Prostate gland (tissue), 2 donors: ENCODE measurements at regions of chr10 and their contacts with region 1.

Region 1: GRCh38 chr10:35126530-35127296 is at the start of gene CREM:
- DNase-seq: peak; percentile 99
- H3K4me3 ChIP-seq: peak within 1 kb of the TSS; percentile 64 to 98
- H3K27ac ChIP-seq: peak within 1 kb of the TSS; percentile 97 to 99
- H3K4me1 ChIP-seq: no peaks in the 10 kb centered on the region
- H3K27me3 ChIP-seq: no peaks in the 10 kb centered on the region
- CTCF ChIP-seq: peak; percentile 80 to 94 (median 90)
- POLR2A ChIP-seq: peak; percentile 97
- total RNA-seq, gene CREM: 25.5 to 75.3 TPM

Region 2: DNA sequence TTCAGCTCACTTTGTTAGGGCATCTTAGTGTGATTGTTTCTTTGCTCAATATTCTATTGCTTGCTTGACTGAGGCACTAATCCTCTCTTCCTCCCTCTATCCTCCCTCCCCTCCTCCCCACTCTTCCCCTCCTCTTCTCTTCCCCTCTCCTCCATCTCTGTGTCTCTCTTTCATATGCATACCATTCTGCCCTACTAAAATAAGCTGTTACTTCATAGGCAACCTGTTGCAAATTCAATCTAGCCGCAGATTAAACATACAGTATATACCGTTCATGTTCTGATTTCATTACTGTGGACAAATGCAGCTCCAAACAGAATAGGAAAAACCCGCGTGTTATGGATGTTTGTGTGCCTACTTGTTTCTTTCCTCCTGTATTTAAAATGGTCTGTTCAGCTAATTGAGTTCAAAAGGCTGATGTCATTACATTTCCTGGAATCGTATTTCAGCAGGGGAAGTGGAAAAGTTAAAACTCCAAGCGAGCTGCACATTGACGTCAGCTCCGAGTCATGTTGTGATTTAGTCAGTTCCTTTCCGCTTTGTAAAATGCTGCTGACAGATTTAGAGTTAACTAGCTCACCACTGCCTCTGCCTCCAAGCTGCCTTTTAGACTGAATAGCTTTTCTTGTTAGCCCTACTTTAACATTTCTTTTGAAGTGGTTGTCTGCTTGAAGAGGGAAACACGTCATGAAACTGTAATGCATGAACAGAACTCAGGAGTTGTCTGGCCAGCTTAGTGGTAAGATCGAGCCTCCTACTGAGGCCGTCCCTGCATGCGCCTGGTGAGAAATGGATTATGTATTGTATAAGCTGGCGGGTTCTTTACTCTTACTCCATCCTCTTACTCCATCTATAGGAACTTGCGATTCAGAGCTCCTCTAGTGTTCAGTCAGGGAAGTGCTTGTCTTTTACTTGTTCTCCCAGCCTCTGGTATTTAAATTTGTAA is 68.9 kb after region 1 on chr10:
- intact Hi-C with region 1: loop called (anchors 2 kb)
- DNase-seq: peak; percentile 55
- H3K4me3 ChIP-seq: peak overlapping the region; percentile 28 to 32
- H3K27ac ChIP-seq: peak overlapping the region; percentile 90 to 94
- H3K4me1 ChIP-seq: no peaks in the 10 kb centered on the region
- H3K27me3 ChIP-seq: no peaks in the 10 kb centered on the region
- CTCF ChIP-seq: peak; percentile 63 to 87 (median 82)
- POLR2A ChIP-seq: no peak

Region 3: DNA sequence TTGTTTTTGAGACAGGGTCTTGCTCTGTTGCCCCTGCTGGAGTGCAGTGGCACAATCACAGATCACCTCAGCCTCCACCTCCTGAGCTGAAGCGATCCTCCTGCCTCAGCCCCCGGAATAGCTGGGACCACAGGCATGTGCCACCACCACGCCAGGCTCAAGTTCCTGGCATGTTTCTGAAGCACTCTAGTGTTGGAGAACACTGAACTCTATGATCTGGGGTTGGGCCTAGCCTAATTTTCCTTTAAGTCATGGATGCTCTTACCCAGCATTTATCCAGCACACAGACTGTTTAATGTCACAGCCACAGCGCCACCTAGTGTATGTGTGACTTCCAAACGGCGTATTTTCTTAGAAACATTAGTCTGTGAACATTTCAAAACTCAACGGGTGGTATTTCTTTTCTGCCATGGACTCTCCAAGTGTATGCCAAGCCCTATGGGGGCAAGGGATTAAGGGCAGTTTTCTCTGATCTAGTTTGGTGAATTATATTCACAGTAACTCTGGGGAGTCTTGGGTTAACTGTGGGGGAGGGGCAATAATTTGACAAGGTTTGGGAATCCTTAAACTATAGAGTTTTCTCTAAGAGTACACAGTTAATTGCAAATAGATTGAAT is 91.7 kb after region 1 on chr10:
- intact Hi-C with region 1: loop called (anchors 2 kb)
- DNase-seq: peak; percentile 77
- H3K4me3 ChIP-seq: no peak overlapping the region
- H3K27ac ChIP-seq: no peak overlapping the region
- H3K4me1 ChIP-seq: no peaks in the 10 kb centered on the region
- H3K27me3 ChIP-seq: no peaks in the 10 kb centered on the region
- CTCF ChIP-seq: peak; percentile 62 to 89 (median 80)
- POLR2A ChIP-seq: no peak